BJ (cell line): ENCODE measurements at regions of chr14 and their contacts with region 1.

Region 1: DNA sequence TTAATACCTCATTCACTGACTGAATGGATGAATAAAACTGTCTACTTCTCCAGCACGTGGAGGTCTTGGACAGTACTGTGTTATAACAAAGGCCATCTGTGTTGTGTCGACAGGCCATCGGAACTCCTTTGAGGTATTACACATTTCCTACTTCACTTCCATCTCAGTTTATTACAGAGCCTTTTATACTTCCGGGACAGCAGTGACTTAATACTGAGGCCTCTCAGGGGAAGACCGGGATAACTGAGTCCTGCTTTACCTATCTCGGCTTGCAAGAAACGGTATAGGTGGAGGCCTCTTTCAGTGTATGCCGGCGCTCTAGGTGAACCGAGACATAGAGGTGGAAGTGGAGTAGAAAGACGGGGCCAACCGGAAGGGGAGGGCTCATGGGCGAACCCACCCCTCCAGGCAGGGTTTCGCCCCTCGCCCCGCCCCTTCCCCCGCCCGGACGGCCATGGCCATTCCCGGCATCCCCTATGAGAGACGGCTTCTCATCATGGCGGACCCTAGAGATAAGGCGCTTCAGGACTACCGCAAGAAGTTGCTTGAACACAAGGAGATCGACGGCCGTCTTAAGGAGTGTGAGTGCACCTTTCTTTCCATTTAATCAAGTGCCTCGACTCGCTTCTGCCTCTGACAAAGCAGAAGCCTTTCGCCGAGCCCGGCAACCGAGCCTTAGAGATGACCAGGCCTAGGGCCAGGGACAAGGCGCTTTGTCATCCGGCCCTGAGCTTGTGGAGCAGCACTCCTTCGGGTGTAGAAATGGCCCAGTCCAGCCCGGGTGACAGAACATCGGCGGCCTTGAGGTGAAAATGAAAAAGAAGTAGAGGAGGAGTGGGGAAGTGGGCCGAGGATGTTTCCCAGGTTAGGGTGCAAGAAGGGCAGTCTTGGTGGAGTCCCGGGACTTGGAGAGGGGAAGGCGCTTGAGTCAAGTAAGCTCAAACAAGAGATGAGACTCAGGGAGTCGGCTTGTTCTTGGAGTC is at the start of gene PSMC6:
- DNase-seq: peak; percentile 47
- H3K4me3 ChIP-seq: peak within 1 kb of the TSS; percentile 76
- H3K27me3 ChIP-seq: no peaks in the 10 kb centered on the region
- CTCF ChIP-seq: no peak
- polyA plus RNA-seq, gene PSMC6: 28.5 and 87.8 TPM in 2 replicates

Region 2: DNA sequence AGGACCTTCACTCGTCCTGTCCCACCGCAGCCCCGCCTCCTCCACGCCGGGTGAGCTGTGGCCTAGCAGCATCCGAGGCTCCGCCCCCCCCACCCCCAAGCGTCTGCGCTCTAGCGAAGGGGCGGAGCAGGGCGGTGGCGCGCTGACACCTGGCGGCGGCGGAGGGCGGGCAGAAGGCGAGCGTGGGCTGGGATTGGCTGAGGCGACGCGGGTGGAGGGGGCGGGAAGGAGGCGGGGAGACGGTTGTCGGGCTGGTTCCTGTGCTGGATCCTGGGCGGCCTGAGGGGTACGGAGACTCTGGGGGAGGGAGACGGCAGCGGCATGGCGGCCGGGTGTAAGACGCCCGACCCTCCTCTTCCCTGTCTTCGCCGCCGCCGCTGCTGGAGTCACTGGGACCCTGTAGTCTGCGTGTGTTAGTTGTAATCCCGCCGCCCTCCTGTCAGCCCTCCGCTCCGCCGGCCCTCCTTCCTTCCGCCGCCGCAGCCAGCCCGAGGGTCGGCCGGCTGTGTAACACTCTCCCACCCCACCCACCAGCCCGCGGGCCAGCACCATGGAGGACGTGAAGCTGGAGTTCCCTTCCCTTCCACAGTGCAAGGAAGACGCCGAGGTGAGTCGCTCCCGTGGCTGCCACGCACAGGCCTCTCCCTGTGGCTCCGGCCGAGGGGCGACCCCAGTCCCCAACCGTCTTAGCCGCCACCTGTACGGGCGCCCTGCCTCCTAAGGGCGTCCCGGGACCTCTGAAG is 23.1 kb after region 1 on chr14 and contains the start of gene STYX:
- CTCF ChIA-PET with region 1: interaction called, 3 read pairs
- POLR2A ChIA-PET with region 1: interaction called, 20 read pairs
- DNase-seq: peak; percentile 86
- H3K4me3 ChIP-seq: peak within 1 kb of the TSS; percentile 82
- H3K27me3 ChIP-seq: no peaks in the 10 kb centered on the region
- CTCF ChIP-seq: no peak
- polyA plus RNA-seq, gene STYX: 4.0 and 7.9 TPM in 2 replicates